Activated T-helper 1 cell treated with anti-CD3 and anti-CD28 coated beads, Interleukin-12 subunit alpha, Interleukin-12 subunit beta, Interleukin-2, Interleukin-4 antibody, amounts not matched to agents 30 ng/mL and 10 ng/mL and 1 ng/mL, durations not matched to agents 14 hours and 24 hours and 36 hours (primary cell): ENCODE measurements at regions of chr2 and their contacts with region 1.

Region 1: GRCh38 chr2:39379643-39380524 is 57.2 kb downstream of the MAP4K3 start:
- DNase-seq: no peak
- H3K4me3 Mint-ChIP-seq: no peak overlapping the region
- H3K27ac Mint-ChIP-seq: peak overlapping the region; percentile 67
- H3K4me1 Mint-ChIP-seq: peaks cover 39% of the 10 kb centered on the region
- H3K27me3 Mint-ChIP-seq: no peaks in the 10 kb centered on the region

Region 2: DNA sequence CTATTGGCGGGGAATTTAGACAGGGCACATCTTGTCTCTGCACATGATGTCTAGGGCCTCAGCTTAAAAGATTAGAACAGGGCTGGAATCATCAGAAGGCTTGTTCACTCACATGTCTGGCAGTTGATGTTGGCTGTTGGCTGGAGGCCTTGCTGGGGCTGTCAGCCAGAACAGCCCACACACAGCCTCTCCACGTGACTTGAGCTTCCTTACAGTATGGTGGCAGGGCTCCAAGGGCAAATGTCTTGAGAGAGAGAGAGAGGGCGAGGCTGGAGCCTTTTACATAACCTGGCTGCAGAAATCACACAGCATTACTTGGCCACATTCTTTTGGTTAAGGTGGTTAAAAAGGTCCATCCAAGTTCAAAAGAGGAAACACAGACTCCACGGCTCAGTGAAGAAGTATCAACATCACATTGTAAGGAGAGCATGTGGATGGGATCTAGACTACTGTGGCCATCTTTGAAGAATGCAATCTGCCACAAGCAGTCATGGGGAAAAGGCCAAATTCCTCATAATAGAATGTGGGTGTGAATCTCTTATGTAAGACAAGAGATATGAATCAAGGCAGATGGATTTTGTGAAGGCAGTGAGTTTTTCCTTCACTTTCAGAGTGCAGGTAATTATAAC is 659.2 kb before region 1 on chr2:
- intact Hi-C with region 1: no loop called
- DNase-seq: no peak
- H3K4me3 Mint-ChIP-seq: peak overlapping the region; percentile 40
- H3K27ac Mint-ChIP-seq: peak overlapping the region; percentile 87
- H3K4me1 Mint-ChIP-seq: peaks cover 59% of the 10 kb centered on the region
- H3K27me3 Mint-ChIP-seq: no peaks in the 10 kb centered on the region

Region 3: DNA sequence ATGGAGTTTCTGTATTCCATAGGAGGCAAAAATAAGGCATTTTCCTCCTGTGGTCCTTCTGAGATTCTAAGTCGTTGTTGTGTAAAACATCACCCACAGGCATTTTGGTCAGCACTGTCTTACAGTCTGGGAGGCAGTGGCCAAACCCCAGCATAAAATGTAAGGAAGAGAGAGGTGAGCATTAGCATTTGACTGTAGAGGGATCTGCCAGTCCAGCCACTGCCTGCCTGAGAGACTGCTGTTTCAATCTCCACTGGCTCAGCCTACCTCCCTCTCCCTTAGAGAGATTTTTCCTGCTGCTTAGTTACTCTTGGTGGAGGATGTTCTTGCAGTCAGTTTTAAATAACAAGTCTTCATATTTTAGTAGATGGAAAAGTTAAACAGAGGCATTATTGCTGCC is 413.2 kb before region 1 on chr2:
- intact Hi-C with region 1: no loop called
- DNase-seq: no peak
- H3K4me3 Mint-ChIP-seq: no peak overlapping the region
- H3K27ac Mint-ChIP-seq: no peak overlapping the region
- H3K4me1 Mint-ChIP-seq: no peaks in the 10 kb centered on the region
- H3K27me3 Mint-ChIP-seq: peaks cover 25% of the 10 kb centered on the region

Region 4: GRCh38 chr2:39436592-39437510 is 57.0 kb after region 1 on chr2 and contains the start of gene MAP4K3:
- intact Hi-C with region 1: loop called (anchors 1 kb)
- DNase-seq: peak; percentile 65
- H3K4me3 Mint-ChIP-seq: peak within 1 kb of the TSS; percentile 96
- H3K27ac Mint-ChIP-seq: peak within 1 kb of the TSS; percentile 86
- H3K4me1 Mint-ChIP-seq: peaks cover 51% of the 10 kb centered on the region
- H3K27me3 Mint-ChIP-seq: no peaks in the 10 kb centered on the region
- total RNA-seq, gene MAP4K3: 15.7 and 24.1 TPM in 2 replicates

Region 5: DNA sequence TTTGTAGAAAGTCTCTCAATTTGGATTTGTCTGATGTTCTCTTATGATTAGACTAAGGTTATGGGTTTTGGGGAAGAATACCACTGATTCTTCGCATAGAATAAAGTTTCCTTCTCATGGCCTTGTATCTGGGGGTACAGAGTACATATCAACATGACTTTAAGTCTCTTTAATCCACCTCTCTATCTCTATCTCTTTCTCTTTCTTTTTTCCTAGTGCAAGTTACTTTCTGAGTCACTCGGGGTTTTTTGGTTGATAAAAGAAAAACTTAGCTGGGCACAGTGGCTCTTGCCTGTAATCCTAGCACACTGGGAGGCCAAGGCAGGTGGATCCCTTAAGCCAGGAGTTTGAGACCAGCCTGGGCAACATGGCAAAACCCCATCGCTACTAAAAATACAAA is 157.3 kb after region 1 on chr2:
- intact Hi-C with region 1: loop called (anchors 5 kb)
- DNase-seq: no peak
- H3K4me3 Mint-ChIP-seq: no peak overlapping the region
- H3K27ac Mint-ChIP-seq: no peak overlapping the region
- H3K4me1 Mint-ChIP-seq: peaks cover 12% of the 10 kb centered on the region
- H3K27me3 Mint-ChIP-seq: peaks cover 4% of the 10 kb centered on the region

Region 6: DNA sequence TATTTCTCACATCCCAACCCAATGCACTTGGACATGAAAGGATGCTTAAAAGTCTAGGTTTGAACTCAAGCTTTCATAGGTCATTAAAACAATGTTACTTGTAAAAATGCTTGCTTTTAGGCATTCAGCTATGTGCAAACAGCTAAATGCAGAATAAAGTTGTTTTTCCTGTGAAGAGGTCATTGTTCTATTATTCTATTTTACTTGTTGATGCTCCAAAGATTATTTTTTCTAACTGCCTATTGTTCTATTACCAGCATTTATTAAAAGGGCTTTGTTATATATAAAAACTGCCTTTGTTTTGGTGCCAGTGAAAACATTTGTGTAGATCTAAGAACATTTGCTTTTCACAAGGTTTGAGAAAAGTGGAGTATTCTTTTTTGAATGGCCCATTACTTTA is 335.2 kb after region 1 on chr2:
- intact Hi-C with region 1: no loop called
- DNase-seq: no peak
- H3K4me3 Mint-ChIP-seq: no peak overlapping the region
- H3K27ac Mint-ChIP-seq: no peak overlapping the region
- H3K4me1 Mint-ChIP-seq: no peaks in the 10 kb centered on the region
- H3K27me3 Mint-ChIP-seq: peaks cover 7% of the 10 kb centered on the region

Region 7: GRCh38 chr2:39728941-39729351 is 349.1 kb after region 1 on chr2:
- intact Hi-C with region 1: loop called (anchors 1 kb)
- DNase-seq: no peak
- H3K4me3 Mint-ChIP-seq: no peak overlapping the region
- H3K27ac Mint-ChIP-seq: no peak overlapping the region
- H3K4me1 Mint-ChIP-seq: no peaks in the 10 kb centered on the region
- H3K27me3 Mint-ChIP-seq: peaks cover 2% of the 10 kb centered on the region